Activated CD4-positive, alpha-beta T cell treated with anti-CD3 and anti-CD28 coated beads for 36 hours (primary cell): ENCODE measurements at regions of chr10 and their contacts with region 1.

Region 1: GRCh38 chr10:72319416-72320254 is 35.1 kb downstream of the DNAJB12 start:
- DNase-seq: peak; percentile 95
- ATAC-seq: peak; percentile 48
- H3K4me3 Mint-ChIP-seq: peak overlapping the region; percentile 86
- H3K27ac Mint-ChIP-seq: peak overlapping the region; percentile 100
- H3K4me1 Mint-ChIP-seq: peaks cover 84% of the 10 kb centered on the region
- H3K27me3 Mint-ChIP-seq: no peaks in the 10 kb centered on the region

Region 2: DNA sequence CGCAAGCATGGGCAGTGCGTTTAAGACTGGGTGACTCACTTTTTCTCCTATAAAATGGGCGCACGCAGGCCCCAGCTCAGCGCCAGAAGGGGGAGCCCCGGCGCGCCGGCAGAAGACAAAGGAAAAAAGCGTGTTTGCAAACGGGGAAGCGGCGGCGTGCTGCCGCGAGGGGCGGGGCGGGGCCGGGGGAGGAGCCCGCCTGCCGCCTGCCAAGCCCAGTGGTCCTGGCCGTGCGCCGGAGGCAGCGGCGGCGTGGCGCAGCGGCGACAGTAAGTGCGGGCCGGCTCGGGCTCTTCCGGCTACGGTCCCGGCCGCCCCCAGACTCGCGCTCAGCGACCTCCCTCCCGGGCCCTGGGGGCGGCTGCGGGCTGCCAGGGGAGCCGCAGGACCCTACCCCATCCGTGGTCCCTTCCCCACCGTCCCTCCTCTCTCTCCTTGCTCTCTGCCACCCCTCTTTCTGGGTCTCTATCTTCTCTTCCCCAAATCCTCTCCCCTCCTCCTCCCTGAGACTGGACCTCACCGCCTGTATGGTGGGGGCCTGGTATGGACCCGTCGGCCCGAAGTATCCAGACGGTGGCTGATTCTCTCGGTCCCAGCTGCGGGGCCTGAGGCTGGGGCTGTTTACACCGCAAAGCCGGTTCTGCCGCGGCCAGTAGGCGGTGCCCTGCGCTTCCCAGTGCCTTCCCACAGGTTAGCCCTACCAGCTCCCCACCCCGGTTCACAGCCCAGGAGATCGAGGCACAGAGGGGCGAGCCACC is 1000.4 kb before region 1 on chr10 and contains the start of gene SLC29A3:
- CTCF ChIA-PET with region 1: no interaction called
- POLR2A ChIA-PET with region 1: no interaction called
- intact Hi-C with region 1: no loop called
- DNase-seq: peak; percentile 94
- ATAC-seq: peak; percentile 87
- H3K4me3 Mint-ChIP-seq: peak within 1 kb of the TSS; percentile 85
- H3K27ac Mint-ChIP-seq: peak within 1 kb of the TSS; percentile 77
- H3K4me1 Mint-ChIP-seq: peaks cover 33% of the 10 kb centered on the region
- H3K27me3 Mint-ChIP-seq: no peaks in the 10 kb centered on the region
- total RNA-seq, gene SLC29A3: 2.4 to 2.6 TPM

Region 3: GRCh38 chr10:71766702-71767419 is 552.8 kb before region 1 on chr10:
- CTCF ChIA-PET with region 1: no interaction called
- POLR2A ChIA-PET with region 1: no interaction called
- intact Hi-C with region 1: loop called in 1 of 2 experiments (anchors 5 kb)
- DNase-seq: no peak
- ATAC-seq: no peak
- H3K4me3 Mint-ChIP-seq: no peak overlapping the region
- H3K27ac Mint-ChIP-seq: peak overlapping the region; percentile 92
- H3K4me1 Mint-ChIP-seq: peaks cover 84% of the 10 kb centered on the region
- H3K27me3 Mint-ChIP-seq: no peaks in the 10 kb centered on the region

Region 4: GRCh38 chr10:72273410-72274212 is 46.0 kb before region 1 on chr10 and contains the start of gene DDIT4:
- CTCF ChIA-PET with region 1: interaction called, 11 read pairs
- POLR2A ChIA-PET with region 1: interaction called, 42 read pairs
- intact Hi-C with region 1: loop called (anchors 1 kb)
- DNase-seq: peak; percentile 100
- ATAC-seq: peak; percentile 84
- H3K4me3 Mint-ChIP-seq: peak within 1 kb of the TSS; percentile 95
- H3K27ac Mint-ChIP-seq: peak within 1 kb of the TSS; percentile 99
- H3K4me1 Mint-ChIP-seq: peaks cover 44% of the 10 kb centered on the region
- H3K27me3 Mint-ChIP-seq: no peaks in the 10 kb centered on the region
- total RNA-seq, gene DDIT4: 750 to 1,039 TPM

Region 5: DNA sequence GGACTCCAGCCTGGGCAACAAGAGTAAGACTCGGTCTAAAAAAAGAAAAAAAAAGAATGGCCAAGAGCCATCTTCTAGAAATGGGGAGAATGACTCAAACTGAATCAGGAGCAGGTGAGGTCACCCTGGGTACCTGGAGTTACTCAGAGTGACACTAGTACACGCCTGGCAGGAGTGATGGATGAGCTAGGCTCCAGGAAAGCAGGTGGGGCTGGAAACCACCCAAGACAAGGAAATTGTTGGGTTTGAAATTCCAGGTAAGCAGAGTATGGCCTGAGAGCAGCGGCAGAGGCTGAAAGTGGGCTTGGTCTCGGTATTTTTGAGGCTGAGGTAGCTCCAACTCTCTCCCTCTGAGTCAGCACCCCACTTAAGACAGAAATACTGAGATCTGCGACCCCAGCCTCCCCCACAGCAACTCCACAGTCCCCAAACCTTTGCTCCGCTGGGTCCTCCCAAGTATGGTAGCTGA is 27.4 kb before region 1 on chr10:
- CTCF ChIA-PET with region 1: interaction called, 8 read pairs
- POLR2A ChIA-PET with region 1: interaction called, 124 read pairs
- intact Hi-C with region 1: loop called (anchors 1 kb)
- DNase-seq: peak; percentile 84
- ATAC-seq: peak; percentile 57
- H3K4me3 Mint-ChIP-seq: peak overlapping the region; percentile 56
- H3K27ac Mint-ChIP-seq: peak overlapping the region; percentile 99
- H3K4me1 Mint-ChIP-seq: peaks cover 63% of the 10 kb centered on the region
- H3K27me3 Mint-ChIP-seq: no peaks in the 10 kb centered on the region

Region 6: GRCh38 chr10:72308320-72308987 is 11.2 kb before region 1 on chr10:
- CTCF ChIA-PET with region 1: interaction called, 22 read pairs
- POLR2A ChIA-PET with region 1: interaction called, 104 read pairs
- intact Hi-C with region 1: loop called (anchors 1 kb)
- DNase-seq: peak; percentile 68
- ATAC-seq: peak; percentile 26
- H3K4me3 Mint-ChIP-seq: peak overlapping the region; percentile 9
- H3K27ac Mint-ChIP-seq: peak overlapping the region; percentile 89
- H3K4me1 Mint-ChIP-seq: peaks cover 74% of the 10 kb centered on the region
- H3K27me3 Mint-ChIP-seq: no peaks in the 10 kb centered on the region

Region 7: GRCh38 chr10:72354478-72355213 is 35.0 kb after region 1 on chr10 and contains the start of gene DNAJB12:
- CTCF ChIA-PET with region 1: no interaction called
- POLR2A ChIA-PET with region 1: no interaction called
- intact Hi-C with region 1: loop called in 1 of 2 experiments (anchors 1 kb)
- DNase-seq: peak; percentile 93
- ATAC-seq: peak; percentile 83
- H3K4me3 Mint-ChIP-seq: peak within 1 kb of the TSS; percentile 82
- H3K27ac Mint-ChIP-seq: peak within 1 kb of the TSS; percentile 98
- H3K4me1 Mint-ChIP-seq: peaks cover 35% of the 10 kb centered on the region
- H3K27me3 Mint-ChIP-seq: no peaks in the 10 kb centered on the region
- total RNA-seq, gene DNAJB12: 19.7 to 21.9 TPM

Region 8: DNA sequence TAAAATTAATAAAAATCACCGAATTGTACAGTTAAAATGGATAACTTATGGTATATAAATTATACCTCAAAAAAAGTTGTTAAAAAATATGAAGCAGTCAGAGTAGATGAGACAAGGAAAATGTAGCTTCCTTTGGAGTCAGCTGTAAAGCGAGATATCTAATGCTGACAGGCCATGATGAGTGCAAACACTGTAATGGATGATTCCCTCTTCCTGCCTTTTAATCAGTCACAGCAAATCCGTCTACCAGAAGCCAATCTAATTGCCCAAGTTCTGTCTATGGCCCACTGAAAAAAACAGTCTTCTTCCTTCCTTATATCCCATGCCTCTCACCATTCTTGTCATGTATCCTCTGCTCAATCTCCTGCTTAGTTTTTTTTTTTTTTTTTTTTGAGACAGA is 95.0 kb after region 1 on chr10:
- CTCF ChIA-PET with region 1: no interaction called
- POLR2A ChIA-PET with region 1: no interaction called
- intact Hi-C with region 1: no loop called
- DNase-seq: no peak
- ATAC-seq: no peak
- H3K4me3 Mint-ChIP-seq: no peak overlapping the region
- H3K27ac Mint-ChIP-seq: no peak overlapping the region
- H3K4me1 Mint-ChIP-seq: no peaks in the 10 kb centered on the region
- H3K27me3 Mint-ChIP-seq: no peaks in the 10 kb centered on the region

Region 9: DNA sequence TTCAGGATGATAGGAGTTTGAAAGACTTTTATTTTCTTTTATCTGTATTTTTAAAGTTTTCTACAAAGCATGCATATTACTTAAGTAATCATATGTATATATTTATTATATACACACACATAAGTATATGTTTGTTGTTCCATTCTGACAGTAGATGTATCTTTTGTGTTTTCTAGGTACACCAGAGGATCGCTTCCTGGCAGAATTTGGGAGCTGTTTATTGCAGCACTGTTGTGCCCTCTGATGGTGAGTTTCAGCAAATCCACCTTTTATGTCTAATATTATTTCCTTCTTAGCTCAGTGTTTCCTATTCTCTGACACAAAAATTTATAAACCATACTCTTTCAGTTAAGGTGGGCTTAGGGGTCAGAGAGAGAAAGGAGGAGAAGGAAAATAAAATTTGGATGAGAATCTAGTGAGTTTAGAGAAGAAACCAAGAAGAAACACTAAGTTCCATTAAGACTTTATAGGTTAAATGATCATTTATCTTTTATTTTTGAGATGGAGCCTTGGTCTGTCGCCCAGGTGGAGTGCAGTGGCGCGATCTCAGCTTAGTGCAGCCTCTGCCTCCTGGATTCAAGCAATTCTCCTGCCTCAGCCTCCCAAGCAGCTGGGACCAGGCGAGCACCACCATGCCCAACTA is 514.7 kb after region 1 on chr10:
- CTCF ChIA-PET with region 1: no interaction called
- POLR2A ChIA-PET with region 1: no interaction called
- intact Hi-C with region 1: no loop called
- DNase-seq: peak; percentile 52
- ATAC-seq: peak; percentile 58
- H3K4me3 Mint-ChIP-seq: no peak overlapping the region
- H3K27ac Mint-ChIP-seq: no peak overlapping the region
- H3K4me1 Mint-ChIP-seq: peaks cover 2% of the 10 kb centered on the region
- H3K27me3 Mint-ChIP-seq: no peaks in the 10 kb centered on the region

Region 10: GRCh38 chr10:72858067-72858466 is 538.4 kb after region 1 on chr10:
- CTCF ChIA-PET with region 1: no interaction called
- POLR2A ChIA-PET with region 1: no interaction called
- intact Hi-C with region 1: no loop called
- DNase-seq: no peak
- ATAC-seq: no peak
- H3K4me3 Mint-ChIP-seq: no peak overlapping the region
- H3K27ac Mint-ChIP-seq: no peak overlapping the region
- H3K4me1 Mint-ChIP-seq: no peaks in the 10 kb centered on the region
- H3K27me3 Mint-ChIP-seq: no peaks in the 10 kb centered on the region